ENCODE measurements at regions of chr2 and their contacts with region 1.

Region 1: DNA sequence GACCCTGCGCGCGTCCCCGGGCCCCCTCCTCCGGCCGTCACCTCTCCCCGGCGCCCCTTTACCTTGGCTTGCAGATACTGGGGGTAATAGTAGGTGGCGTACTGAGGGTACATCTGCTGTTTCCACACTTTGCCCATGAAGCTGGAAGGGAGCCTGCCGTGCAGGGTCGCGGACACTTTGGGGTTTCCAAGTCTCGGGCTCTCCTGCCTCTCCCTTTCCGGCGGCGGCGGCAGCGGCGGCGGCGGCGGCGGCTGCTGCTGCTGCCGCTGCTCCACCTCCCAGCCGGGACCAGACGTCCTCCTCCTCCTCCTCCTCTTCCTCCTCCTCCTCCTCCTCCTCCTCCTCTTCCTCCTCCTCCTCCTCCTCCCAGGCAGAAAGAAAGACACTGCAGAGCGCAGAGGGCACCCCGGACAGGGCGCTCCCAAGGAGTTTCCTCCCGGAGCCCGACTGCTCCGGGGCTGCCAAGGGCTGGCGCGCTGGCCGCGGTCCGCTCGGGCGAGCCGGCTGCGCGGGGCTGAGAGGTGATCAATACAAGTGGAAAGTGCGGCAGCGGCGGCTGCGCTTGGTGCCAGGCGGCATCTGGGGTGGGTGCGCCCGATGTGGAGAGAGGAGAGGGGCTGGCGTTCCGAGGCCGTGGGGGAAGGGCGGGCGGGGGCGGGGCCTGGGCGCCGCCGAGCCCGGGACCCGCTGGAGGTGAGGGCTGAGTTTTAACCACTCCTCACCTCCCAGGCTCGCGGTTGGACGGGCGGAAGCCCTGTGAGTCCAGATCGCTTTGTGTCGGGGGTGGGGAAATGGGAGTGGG is at the start of gene RBMS1:
- DNase-seq: peak; percentile 75
- ATAC-seq: peak; percentile 72 to 82
- total RNA-seq, gene RBMS1: 56.8 to 74.8 TPM

Region 2: GRCh38 chr2:160324161-160324800 is 169.1 kb before region 1 on chr2:
- intact Hi-C with region 1: loop called in 1 of 2 experiments (anchors 10 kb)
- DNase-seq: peak; percentile 60
- ATAC-seq: peak; percentile 27 to 40

Region 3: DNA sequence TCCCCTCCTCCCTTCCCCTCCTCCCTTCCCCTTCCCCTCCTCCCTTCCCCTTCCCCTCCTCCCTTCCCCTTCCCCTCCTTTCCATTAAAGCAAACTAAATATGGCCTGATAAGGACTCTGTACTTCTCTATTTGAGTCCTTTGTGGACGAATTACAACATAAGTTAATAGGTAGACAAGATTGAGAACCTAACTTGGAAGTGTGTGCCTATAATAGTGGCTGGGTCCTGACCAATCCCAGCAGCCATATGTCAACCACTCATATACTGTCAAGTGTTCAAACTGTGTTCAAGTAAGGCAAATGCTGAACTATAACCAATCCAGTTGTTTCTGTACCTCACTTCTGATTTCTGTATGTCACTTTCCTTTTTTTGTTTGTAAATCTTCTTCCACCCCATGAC is 97.2 kb after region 1 on chr2:
- intact Hi-C with region 1: no loop called
- DNase-seq: no peak
- ATAC-seq: no peak

Measured in left cardiac atrium (tissue), 4 donors.